Naive thymus-derived CD4-positive, alpha-beta T cell (primary cell): ENCODE measurements at regions of chr1 and their contacts with region 1.

Region 1: GRCh38 chr1:110963691-110964399 is at the start of gene LRIF1:
- DNase-seq: peak; percentile 96 to 100 (median 100)
- ATAC-seq: peak; percentile 98
- H3K4me3 ChIP-seq: peak within 1 kb of the TSS; percentile 90
- H3K4me3 Mint-ChIP-seq: peak within 1 kb of the TSS; percentile 81 to 98 (median 93)
- H3K27ac ChIP-seq: peak within 1 kb of the TSS; percentile 89
- H3K27ac Mint-ChIP-seq: peak within 1 kb of the TSS; percentile 89 to 99 (median 97)
- H3K4me1 ChIP-seq: peaks cover 25% of the 10 kb centered on the region in 2 donors
- H3K4me1 Mint-ChIP-seq: peaks cover 29 to 50% (median 35%) of the 10 kb centered on the region in 7 donors
- H3K27me3 ChIP-seq: peaks cover 0 to under 1% of the 10 kb centered on the region in 2 donors
- H3K27me3 Mint-ChIP-seq: peaks cover 12 to 19% (median 15%) of the 10 kb centered on the region in 5 donors
- total RNA-seq, gene LRIF1: 7.9 to 25.8 (median 17.3) TPM

Region 2: DNA sequence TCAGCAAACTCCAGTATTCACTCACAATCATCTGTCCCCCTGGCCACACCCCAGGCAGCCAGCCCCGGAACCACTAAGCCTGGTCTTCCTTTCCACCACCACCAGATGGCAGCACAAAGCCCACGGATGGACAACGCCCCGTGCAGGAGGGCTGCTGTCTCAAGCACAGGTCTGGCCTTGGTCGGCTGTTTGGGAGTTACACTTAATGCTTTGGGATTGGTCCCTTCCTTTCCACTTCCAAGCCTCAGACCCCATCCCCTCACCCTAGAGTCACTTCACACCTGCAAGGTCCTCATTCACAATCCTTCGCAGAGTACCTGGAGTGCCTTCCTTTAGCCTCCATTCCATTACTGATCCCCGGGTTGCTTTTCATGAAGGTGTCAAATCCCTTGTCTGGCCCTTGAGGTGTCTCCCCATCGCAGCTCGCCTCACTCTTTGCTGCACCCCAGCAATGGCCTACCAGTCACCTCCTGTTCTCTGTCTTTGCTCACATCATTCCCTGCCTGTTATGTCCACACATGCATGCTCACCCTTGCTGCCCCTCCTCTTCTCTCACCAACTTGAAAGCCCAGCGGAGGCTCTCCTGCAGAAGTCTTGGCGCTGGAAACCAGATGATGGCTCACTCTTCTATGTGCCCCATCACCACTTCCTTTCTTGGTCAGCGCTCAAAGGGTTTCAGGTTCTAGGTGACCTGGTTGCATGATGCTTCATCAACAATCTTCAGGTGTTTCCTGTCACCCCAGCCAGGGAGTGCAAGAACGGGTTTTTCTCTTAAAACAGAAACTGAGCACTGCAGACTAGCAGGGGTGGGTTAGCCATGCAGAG is 332.8 kb before region 1 on chr1:
- CTCF ChIA-PET with region 1: no interaction called
- POLR2A ChIA-PET with region 1: no interaction called
- intact Hi-C with region 1: loop called (anchors 5 kb)
- DNase-seq: peak; percentile 74 to 87 (median 84)
- ATAC-seq: peak; percentile 87
- H3K4me3 ChIP-seq: peak overlapping the region; percentile 50
- H3K4me3 Mint-ChIP-seq: no peak overlapping the region
- H3K27ac ChIP-seq: peak overlapping the region; percentile 57
- H3K27ac Mint-ChIP-seq: no peak overlapping the region
- H3K4me1 ChIP-seq: peaks cover 58 to 59% of the 10 kb centered on the region in 2 donors
- H3K4me1 Mint-ChIP-seq: peaks cover 38 to 62% (median 52%) of the 10 kb centered on the region in 7 donors
- H3K27me3 ChIP-seq: no peaks in the 10 kb centered on the region
- H3K27me3 Mint-ChIP-seq: no peaks in the 10 kb centered on the region

Region 3: DNA sequence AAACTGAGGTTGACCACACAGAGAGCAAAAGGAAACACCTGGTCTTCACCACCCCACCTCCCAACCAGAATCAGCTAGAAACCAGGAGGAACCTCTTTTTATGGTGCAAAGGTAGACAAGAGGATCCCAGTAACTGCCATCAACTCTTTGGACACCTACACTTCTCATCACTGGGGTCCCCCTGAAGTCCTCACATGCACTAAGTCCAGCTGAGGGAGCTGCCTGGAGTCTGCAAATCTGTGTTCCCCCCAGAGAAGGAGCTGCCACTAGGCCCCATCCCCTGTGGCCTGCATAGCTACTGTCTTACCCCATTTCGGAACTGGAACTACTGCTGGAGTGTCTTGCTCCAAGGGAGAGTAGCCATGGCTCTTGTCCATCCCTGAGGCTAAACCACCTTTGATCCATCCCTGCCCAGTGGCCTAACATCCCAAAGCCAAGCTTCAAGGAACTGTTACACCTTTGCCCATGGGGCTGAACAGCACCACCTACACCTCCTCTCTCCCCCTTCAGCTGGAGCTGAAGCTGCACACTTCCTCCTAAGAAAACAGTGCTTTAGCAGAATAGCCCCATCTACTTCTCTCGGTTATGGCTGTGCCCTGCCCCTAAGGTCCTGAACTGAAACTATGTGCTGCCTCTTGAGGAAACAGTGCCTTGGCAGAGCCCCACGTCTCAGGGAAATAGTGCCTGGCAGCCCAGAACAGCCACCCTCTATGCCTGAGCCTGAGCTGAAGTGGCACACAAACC is 176.3 kb before region 1 on chr1:
- CTCF ChIA-PET with region 1: interaction called, 6 read pairs
- POLR2A ChIA-PET with region 1: interaction called, 14 read pairs
- intact Hi-C with region 1: loop called (anchors 1 to 2 kb)
- DNase-seq: peak in 7 of 9 donors; percentile 25 to 78 (median 61)
- ATAC-seq: peak; percentile 78
- H3K4me3 ChIP-seq: peak overlapping the region; percentile 40
- H3K4me3 Mint-ChIP-seq: peak overlapping the region; percentile 72 to 88 (median 80)
- H3K27ac ChIP-seq: peak overlapping the region; percentile 55
- H3K27ac Mint-ChIP-seq: peak overlapping the region; percentile 72 to 95 (median 87)
- H3K4me1 ChIP-seq: peaks cover 49 to 56% of the 10 kb centered on the region in 2 donors
- H3K4me1 Mint-ChIP-seq: peaks cover 43 to 78% (median 70%) of the 10 kb centered on the region in 7 donors
- H3K27me3 ChIP-seq: no peaks in the 10 kb centered on the region
- H3K27me3 Mint-ChIP-seq: peaks cover 0 to 14% (median 0%) of the 10 kb centered on the region in 5 donors

Region 4: GRCh38 chr1:110879758-110880606 is 83.9 kb before region 1 on chr1:
- CTCF ChIA-PET with region 1: interaction called, 6 read pairs
- POLR2A ChIA-PET with region 1: interaction called, 7 read pairs
- intact Hi-C with region 1: loop called in 1 of 2 experiments (anchors 1 kb)
- DNase-seq: peak in 2 of 9 donors; percentile 63 to 65
- ATAC-seq: peak; percentile 73
- H3K4me3 ChIP-seq: peak overlapping the region; percentile 41
- H3K4me3 Mint-ChIP-seq: peak overlapping the region; percentile 78 to 96 (median 88)
- H3K27ac ChIP-seq: peak overlapping the region; percentile 44
- H3K27ac Mint-ChIP-seq: peak overlapping the region; percentile 89 to 99 (median 93)
- H3K4me1 ChIP-seq: peaks cover 69 to 77% of the 10 kb centered on the region in 2 donors
- H3K4me1 Mint-ChIP-seq: peaks cover 71 to 96% (median 85%) of the 10 kb centered on the region in 7 donors
- H3K27me3 ChIP-seq: no peaks in the 10 kb centered on the region
- H3K27me3 Mint-ChIP-seq: no peaks in the 10 kb centered on the region

Region 5: DNA sequence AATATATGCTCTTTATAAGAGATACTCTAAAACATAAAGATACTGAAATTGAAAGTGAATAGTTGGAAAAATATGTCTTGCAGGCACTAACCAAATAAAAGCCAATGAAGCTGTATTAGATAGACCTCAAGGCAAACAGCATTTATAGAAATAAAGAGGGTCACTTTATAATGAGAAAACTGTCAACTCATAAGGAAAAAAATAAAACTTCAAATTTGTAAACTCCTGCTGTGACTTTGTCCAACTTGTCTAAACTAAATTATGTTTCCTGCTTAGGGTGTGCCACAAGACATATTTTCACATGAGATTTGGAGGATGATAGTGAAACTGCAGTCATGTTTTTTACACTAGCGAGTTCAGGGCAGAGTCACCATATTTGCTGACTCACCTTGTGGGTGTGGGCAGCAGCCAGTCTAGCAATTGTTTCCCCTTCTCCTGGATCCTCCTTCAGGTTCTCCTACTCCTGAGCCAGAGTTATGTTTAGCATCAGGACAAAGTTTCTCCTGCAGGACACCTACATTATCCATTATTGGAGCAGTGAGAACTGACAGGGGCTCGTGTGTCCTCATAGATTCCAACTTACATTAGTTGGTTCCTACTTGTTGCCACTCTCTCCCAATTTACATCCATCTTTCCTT is 47.1 kb before region 1 on chr1:
- CTCF ChIA-PET with region 1: no interaction called
- POLR2A ChIA-PET with region 1: no interaction called
- intact Hi-C with region 1: loop called in 1 of 2 experiments (anchors 5 kb)
- DNase-seq: peak in 1 of 9 donors; percentile 34
- ATAC-seq: peak; percentile 53
- H3K4me3 ChIP-seq: no peak overlapping the region
- H3K4me3 Mint-ChIP-seq: peak overlapping the region in 5 of 10 donors; percentile 6 to 79 (median 19)
- H3K27ac ChIP-seq: no peak overlapping the region
- H3K27ac Mint-ChIP-seq: peak overlapping the region in 1 of 9 donors; percentile 75
- H3K4me1 ChIP-seq: peaks cover 0 to 4% of the 10 kb centered on the region in 2 donors
- H3K4me1 Mint-ChIP-seq: peaks cover 7 to 16% (median 13%) of the 10 kb centered on the region in 7 donors
- H3K27me3 ChIP-seq: no peaks in the 10 kb centered on the region
- H3K27me3 Mint-ChIP-seq: peaks cover 0 to 12% (median under 1%) of the 10 kb centered on the region in 5 donors

Region 6: GRCh38 chr1:111127923-111128643 is 164.2 kb after region 1 on chr1:
- CTCF ChIA-PET with region 1: no interaction called
- POLR2A ChIA-PET with region 1: no interaction called
- intact Hi-C with region 1: no loop called
- DNase-seq: no peak
- ATAC-seq: peak; percentile 76
- H3K4me3 ChIP-seq: no peak overlapping the region
- H3K4me3 Mint-ChIP-seq: peak overlapping the region in 2 of 10 donors; percentile 4 to 43
- H3K27ac ChIP-seq: no peak overlapping the region
- H3K27ac Mint-ChIP-seq: peak overlapping the region in 3 of 9 donors; percentile 6 to 58 (median 53)
- H3K4me1 ChIP-seq: no peaks in the 10 kb centered on the region
- H3K4me1 Mint-ChIP-seq: peaks cover 19 to 38% (median 29%) of the 10 kb centered on the region in 7 donors
- H3K27me3 ChIP-seq: no peaks in the 10 kb centered on the region
- H3K27me3 Mint-ChIP-seq: no peaks in the 10 kb centered on the region

Region 7: DNA sequence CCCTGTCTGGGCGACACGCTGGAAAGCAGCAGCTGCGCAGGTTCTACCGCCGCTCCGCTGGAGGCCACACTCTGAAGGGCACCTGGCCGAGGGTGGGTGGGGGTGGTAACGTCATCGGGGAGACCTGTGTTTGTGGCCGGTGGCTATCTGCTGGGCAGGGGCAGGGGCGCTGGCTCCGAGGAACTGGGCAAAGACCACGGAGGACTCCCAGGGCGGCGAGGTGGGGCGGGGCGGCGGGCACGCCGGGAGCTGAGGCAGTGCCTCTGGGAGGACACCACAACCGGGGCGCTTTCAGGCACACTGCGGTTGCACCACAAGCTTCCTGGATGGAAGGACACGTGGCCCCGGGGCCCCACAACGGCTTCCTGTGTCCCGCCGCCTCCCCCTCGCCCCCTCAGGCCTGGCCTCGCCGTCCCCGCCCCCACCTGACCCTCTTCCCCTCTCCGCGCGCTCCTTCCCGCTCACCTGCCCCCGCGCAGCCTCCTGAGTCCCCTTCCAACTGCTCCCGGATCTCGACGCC is 239.9 kb after region 1 on chr1:
- CTCF ChIA-PET with region 1: no interaction called
- POLR2A ChIA-PET with region 1: no interaction called
- intact Hi-C with region 1: no loop called
- DNase-seq: peak; percentile 51 to 86 (median 82)
- ATAC-seq: peak; percentile 71
- H3K4me3 ChIP-seq: peak overlapping the region; percentile 84
- H3K4me3 Mint-ChIP-seq: peak overlapping the region; percentile 90 to 100 (median 99)
- H3K27ac ChIP-seq: peak overlapping the region; percentile 90
- H3K27ac Mint-ChIP-seq: peak overlapping the region; percentile 80 to 99 (median 96)
- H3K4me1 ChIP-seq: peaks cover 30 to 32% of the 10 kb centered on the region in 2 donors
- H3K4me1 Mint-ChIP-seq: peaks cover 32 to 76% (median 61%) of the 10 kb centered on the region in 7 donors
- H3K27me3 ChIP-seq: no peaks in the 10 kb centered on the region
- H3K27me3 Mint-ChIP-seq: no peaks in the 10 kb centered on the region

Region 8: GRCh38 chr1:111346089-111346885 is 382.4 kb after region 1 on chr1:
- CTCF ChIA-PET with region 1: no interaction called
- POLR2A ChIA-PET with region 1: no interaction called
- intact Hi-C with region 1: loop called in 1 of 2 experiments (anchors 5 kb)
- DNase-seq: peak; percentile 74 to 94 (median 92)
- ATAC-seq: peak; percentile 94
- H3K4me3 ChIP-seq: peak overlapping the region; percentile 90
- H3K4me3 Mint-ChIP-seq: peak overlapping the region; percentile 85 to 97 (median 92)
- H3K27ac ChIP-seq: peak overlapping the region; percentile 61
- H3K27ac Mint-ChIP-seq: peak overlapping the region; percentile 38 to 97 (median 90)
- H3K4me1 ChIP-seq: peaks cover 5 to 9% of the 10 kb centered on the region in 2 donors
- H3K4me1 Mint-ChIP-seq: peaks cover 13 to 26% (median 19%) of the 10 kb centered on the region in 7 donors
- H3K27me3 ChIP-seq: no peaks in the 10 kb centered on the region
- H3K27me3 Mint-ChIP-seq: peaks cover 0 to 19% (median 0%) of the 10 kb centered on the region in 5 donors

Region 9: GRCh38 chr1:111582644-111583618 is 619.1 kb after region 1 on chr1:
- CTCF ChIA-PET with region 1: no interaction called
- POLR2A ChIA-PET with region 1: no interaction called
- intact Hi-C with region 1: no loop called
- DNase-seq: no peak
- ATAC-seq: no peak
- H3K4me3 ChIP-seq: no peak overlapping the region
- H3K4me3 Mint-ChIP-seq: no peak overlapping the region
- H3K27ac ChIP-seq: no peak overlapping the region
- H3K27ac Mint-ChIP-seq: no peak overlapping the region
- H3K4me1 ChIP-seq: peaks cover 5 to 9% of the 10 kb centered on the region in 2 donors
- H3K4me1 Mint-ChIP-seq: peaks cover 0 to 19% (median 7%) of the 10 kb centered on the region in 7 donors
- H3K27me3 ChIP-seq: no peaks in the 10 kb centered on the region
- H3K27me3 Mint-ChIP-seq: no peaks in the 10 kb centered on the region